AG04450 (cell line): ENCODE measurements at regions of chr11 and their contacts with region 1.

Region 1: DNA sequence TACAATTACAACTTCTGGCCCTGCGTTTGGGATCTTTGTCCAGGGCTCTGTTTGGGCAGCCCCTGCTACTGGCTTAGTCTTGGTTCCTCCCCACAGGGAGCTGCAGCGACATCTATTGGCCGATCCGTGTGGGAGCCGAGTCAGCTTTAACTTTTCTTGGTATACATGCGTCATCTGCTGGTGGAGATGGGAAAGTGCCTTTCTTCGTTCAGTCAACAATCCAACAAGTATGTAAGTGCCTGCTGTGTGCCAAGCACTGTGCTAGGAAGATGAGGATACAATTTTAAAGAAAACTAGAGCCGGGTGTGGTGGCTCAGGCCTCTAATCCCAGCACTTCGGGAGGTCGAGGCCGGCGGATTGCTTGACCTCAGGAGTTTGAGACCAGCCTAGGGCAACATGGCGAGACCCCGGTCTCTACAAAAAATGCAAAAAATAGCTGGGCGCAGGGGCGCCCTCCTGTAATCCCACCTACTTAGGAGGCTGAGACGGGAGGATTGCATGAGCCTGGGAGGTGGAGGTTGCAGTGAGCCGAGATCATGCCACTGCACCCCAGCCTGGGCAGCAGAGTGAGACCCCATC is 8.2 kb downstream of the TPBGL start:
- DNase-seq: peak; percentile 66
- H3K4me3 ChIP-seq: no peak overlapping the region
- H3K27ac ChIP-seq: no peak overlapping the region
- H3K27me3 ChIP-seq: peaks cover 38% of the 10 kb centered on the region
- CTCF ChIP-seq: peak; percentile 100

Region 2: DNA sequence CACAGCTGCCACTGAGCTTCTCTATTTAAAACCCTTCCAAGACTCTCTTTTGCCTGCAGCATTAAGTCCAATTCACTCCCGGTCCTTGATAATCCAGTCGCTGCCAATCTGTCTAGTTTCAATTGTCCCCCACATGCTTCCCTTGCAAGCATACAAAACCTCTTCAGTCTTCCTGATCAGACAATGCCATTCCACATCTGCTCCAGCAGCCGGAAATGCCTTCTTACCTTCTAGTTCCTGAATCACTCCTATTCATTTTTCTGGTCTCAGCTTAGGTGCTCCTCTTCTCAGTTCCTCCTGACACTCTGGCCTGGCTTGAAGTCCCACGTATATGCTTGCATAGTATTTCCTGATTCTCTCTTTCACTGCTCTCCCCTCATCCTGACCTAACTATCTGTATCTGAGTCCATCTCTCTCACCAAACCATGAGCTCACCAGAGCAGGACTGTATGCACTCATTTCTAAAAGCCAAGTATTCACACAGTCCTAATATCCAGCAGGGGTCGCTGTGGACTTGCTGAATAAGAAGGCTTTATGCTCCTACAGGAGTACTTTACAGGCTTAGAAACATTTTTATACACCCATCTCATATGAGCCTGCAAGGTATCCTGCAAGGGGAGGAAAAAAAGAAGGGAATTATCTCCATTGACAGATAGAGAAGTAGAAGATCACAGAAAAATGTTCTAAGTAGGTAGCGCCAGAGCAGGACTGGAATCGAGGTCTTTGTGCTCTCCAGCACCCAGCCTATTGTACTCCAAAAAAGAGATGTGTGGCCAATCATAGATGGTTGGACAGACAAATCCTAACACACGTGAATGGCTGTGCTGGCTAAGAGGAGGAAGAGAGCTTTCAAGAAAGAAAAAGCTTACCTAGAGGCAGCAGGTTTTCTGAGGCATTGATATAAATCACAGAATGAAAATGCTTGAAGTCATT is 319.1 kb before region 1 on chr11:
- CTCF ChIA-PET with region 1: interaction called, 71 read pairs
- POLR2A ChIA-PET with region 1: no interaction called
- DNase-seq: peak; percentile 87
- H3K4me3 ChIP-seq: no peak overlapping the region
- H3K27ac ChIP-seq: no peak overlapping the region
- H3K27me3 ChIP-seq: no peaks in the 10 kb centered on the region
- CTCF ChIP-seq: peak; percentile 91

Region 3: DNA sequence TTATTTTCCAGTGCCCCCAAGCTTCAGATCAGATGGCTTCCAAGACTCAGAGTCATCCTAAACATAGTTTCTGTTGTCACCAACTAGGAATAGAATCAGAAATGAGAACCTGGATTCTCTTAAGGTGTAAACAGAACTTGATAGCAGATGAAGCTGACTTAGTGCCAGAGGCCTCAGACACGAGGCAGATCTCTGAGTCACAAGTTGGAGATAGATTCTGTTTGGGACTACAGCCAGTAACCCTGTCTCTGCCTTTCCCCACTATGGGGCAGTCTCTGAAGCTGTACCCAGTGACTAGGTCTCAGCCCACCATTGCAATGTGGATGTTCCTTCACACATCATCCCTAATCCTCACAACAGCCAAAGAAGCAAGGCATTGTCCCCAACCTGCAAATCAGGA is 234.7 kb before region 1 on chr11:
- CTCF ChIA-PET with region 1: interaction called, 10 read pairs
- POLR2A ChIA-PET with region 1: no interaction called
- DNase-seq: peak; percentile 77
- H3K4me3 ChIP-seq: no peak overlapping the region
- H3K27ac ChIP-seq: peak overlapping the region; percentile 72
- H3K27me3 ChIP-seq: no peaks in the 10 kb centered on the region
- CTCF ChIP-seq: peak; percentile 43

Region 4: GRCh38 chr11:75022759-75023396 is 225.9 kb before region 1 on chr11:
- CTCF ChIA-PET with region 1: interaction called, 49 read pairs
- POLR2A ChIA-PET with region 1: interaction called, 3 read pairs
- DNase-seq: peak; percentile 72
- H3K4me3 ChIP-seq: no peak overlapping the region
- H3K27ac ChIP-seq: no peak overlapping the region
- H3K27me3 ChIP-seq: peaks cover 3% of the 10 kb centered on the region
- CTCF ChIP-seq: peak; percentile 99

Region 5: GRCh38 chr11:75031771-75032549 is 216.8 kb before region 1 on chr11:
- CTCF ChIA-PET with region 1: interaction called, 17 read pairs
- POLR2A ChIA-PET with region 1: no interaction called
- DNase-seq: peak; percentile 49
- H3K4me3 ChIP-seq: no peak overlapping the region
- H3K27ac ChIP-seq: peak overlapping the region; percentile 82
- H3K27me3 ChIP-seq: no peaks in the 10 kb centered on the region
- CTCF ChIP-seq: peak; percentile 88

Region 6: DNA sequence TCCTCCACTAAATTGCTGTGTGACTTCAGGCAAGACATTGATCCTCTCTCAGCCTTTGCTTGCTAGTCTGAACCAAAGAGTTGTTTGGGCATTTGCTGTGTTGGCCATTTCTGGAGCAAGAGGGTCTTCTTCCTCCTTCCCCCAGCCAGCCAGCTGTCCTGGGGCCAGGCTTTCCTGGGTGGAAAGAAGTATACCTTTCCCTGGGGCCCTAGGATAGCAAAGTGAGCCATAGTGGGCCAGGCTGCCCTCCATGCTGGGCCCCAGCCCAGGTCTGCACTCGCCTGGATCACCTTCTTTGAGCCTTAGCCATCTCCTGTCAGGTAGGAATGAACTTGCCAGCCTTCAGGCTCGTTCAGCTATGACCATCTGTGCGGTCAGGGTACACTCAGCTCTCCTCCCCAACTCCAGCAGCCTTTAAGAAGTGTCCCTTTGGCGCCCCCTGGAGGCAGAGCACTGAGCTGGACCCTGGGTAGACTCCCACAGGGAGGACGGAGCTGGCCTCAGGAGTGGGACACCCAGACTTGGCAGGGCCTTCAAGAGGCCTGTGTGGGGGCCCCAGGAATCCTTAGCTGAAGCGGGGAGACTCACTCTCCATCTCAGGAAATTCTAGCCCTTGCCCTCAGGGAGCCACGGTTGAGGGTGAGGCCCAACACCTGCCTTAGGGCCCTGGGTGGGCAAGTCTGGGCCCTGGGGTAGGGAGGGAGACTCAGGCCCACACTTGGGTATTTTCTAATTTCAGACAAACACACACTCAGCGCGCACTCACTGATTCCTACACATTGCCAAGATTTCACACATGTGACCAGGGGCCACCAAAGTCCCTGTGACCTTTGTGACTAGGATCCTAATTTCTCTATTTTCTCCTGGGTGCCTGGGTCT is 43.9 kb before region 1 on chr11:
- CTCF ChIA-PET with region 1: interaction called, 20 read pairs
- POLR2A ChIA-PET with region 1: no interaction called
- DNase-seq: peak; percentile 53
- H3K4me3 ChIP-seq: no peak overlapping the region
- H3K27ac ChIP-seq: no peak overlapping the region
- H3K27me3 ChIP-seq: peaks cover 41% of the 10 kb centered on the region
- CTCF ChIP-seq: peak; percentile 95

Region 7: DNA sequence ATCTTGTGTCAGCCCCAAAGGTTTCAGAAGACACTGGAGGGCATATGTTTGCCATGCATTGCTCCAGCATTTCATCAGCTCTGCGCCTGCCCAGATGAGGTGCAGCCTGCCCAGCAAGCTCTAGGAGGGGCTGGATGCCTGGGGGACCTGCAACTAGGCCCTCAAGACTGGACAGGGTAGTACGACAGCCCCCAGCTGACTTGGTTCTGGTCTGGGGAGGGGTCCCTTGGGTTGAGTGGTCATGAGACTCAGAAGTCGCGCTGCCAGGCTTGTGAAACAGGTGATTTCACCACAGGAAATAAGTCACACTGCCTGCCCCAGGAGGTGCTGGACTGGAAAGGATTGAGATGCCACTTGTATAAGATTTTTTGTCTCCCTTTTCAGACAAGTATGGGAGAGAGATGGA is 15.2 kb after region 1 on chr11:
- CTCF ChIA-PET with region 1: interaction called, 10 read pairs
- POLR2A ChIA-PET with region 1: no interaction called
- DNase-seq: no peak
- H3K4me3 ChIP-seq: no peak overlapping the region
- H3K27ac ChIP-seq: no peak overlapping the region
- H3K27me3 ChIP-seq: peaks cover 19% of the 10 kb centered on the region
- CTCF ChIP-seq: no peak